B cell (primary cell): ENCODE measurements at regions of chr10 and their contacts with region 1.

Region 1: GRCh38 chr10:129605986-129606518 is 139.0 kb downstream of the MGMT start:
- DNase-seq: peak; percentile 43
- ATAC-seq: peak; percentile 75
- H3K4me3 ChIP-seq: peak overlapping the region in 4 of 5 experiments; percentile 12 to 46 (median 31)
- H3K4me3 Mint-ChIP-seq: peak overlapping the region; percentile 79
- H3K27ac ChIP-seq: peak overlapping the region in 1 of 2 donors; percentile 59
- H3K27ac Mint-ChIP-seq: peak overlapping the region; percentile 89
- H3K4me1 ChIP-seq: peaks cover 0 to 5% of the 10 kb centered on the region in 2 donors
- H3K4me1 Mint-ChIP-seq: peaks cover 41% of the 10 kb centered on the region
- H3K27me3 ChIP-seq: no peaks in the 10 kb centered on the region
- H3K27me3 Mint-ChIP-seq: no peaks in the 10 kb centered on the region
- CTCF ChIP-seq: no peak

Region 2: GRCh38 chr10:129398711-129399141 is 207.3 kb before region 1 on chr10:
- CTCF ChIA-PET with region 1: no interaction called
- POLR2A ChIA-PET with region 1: no interaction called
- intact Hi-C with region 1: no loop called
- DNase-seq: no peak
- ATAC-seq: no peak
- H3K4me3 ChIP-seq: no peak overlapping the region
- H3K4me3 Mint-ChIP-seq: no peak overlapping the region
- H3K27ac ChIP-seq: no peak overlapping the region
- H3K27ac Mint-ChIP-seq: no peak overlapping the region
- H3K4me1 ChIP-seq: no peaks in the 10 kb centered on the region
- H3K4me1 Mint-ChIP-seq: no peaks in the 10 kb centered on the region
- H3K27me3 ChIP-seq: no peaks in the 10 kb centered on the region
- H3K27me3 Mint-ChIP-seq: no peaks in the 10 kb centered on the region
- CTCF ChIP-seq: no peak

Region 3: DNA sequence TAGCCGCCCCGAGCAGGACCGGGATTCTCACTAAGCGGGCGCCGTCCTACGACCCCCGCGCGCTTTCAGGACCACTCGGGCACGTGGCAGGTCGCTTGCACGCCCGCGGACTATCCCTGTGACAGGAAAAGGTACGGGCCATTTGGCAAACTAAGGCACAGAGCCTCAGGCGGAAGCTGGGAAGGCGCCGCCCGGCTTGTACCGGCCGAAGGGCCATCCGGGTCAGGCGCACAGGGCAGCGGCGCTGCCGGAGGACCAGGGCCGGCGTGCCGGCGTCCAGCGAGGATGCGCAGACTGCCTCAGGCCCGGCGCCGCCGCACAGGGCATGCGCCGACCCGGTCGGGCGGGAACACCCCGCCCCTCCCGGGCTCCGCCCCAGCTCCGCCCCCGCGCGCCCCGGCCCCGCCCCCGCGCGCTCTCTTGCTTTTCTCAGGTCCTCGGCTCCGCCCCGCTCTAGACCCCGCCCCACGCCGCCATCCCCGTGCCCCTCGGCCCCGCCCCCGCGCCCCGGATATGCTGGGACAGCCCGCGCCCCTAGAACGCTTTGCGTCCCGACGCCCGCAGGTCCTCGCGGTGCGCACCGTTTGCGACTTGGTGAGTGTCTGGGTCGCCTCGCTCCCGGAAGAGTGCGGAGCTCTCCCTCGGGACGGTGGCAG is 139.2 kb before region 1 on chr10 and contains the start of gene MGMT:
- CTCF ChIA-PET with region 1: no interaction called
- POLR2A ChIA-PET with region 1: no interaction called
- intact Hi-C with region 1: loop called (anchors 1 kb)
- DNase-seq: peak; percentile 94
- ATAC-seq: peak; percentile 99
- H3K4me3 ChIP-seq: peak within 1 kb of the TSS; percentile 6 to 85 (median 82)
- H3K4me3 Mint-ChIP-seq: peak within 1 kb of the TSS; percentile 89
- H3K27ac ChIP-seq: peak within 1 kb of the TSS; percentile 69 to 81
- H3K27ac Mint-ChIP-seq: peak within 1 kb of the TSS; percentile 85
- H3K4me1 ChIP-seq: peaks cover 13 to 18% of the 10 kb centered on the region in 2 donors
- H3K4me1 Mint-ChIP-seq: peaks cover 22% of the 10 kb centered on the region
- H3K27me3 ChIP-seq: no peaks in the 10 kb centered on the region
- H3K27me3 Mint-ChIP-seq: no peaks in the 10 kb centered on the region
- CTCF ChIP-seq: no peak
- total RNA-seq, gene MGMT: 84.5 and 87.7 TPM in 2 replicates

Region 4: GRCh38 chr10:129551767-129552518 is 54.1 kb before region 1 on chr10:
- CTCF ChIA-PET with region 1: no interaction called
- POLR2A ChIA-PET with region 1: no interaction called
- intact Hi-C with region 1: loop called (anchors 2 kb)
- DNase-seq: peak; percentile 38
- ATAC-seq: peak; percentile 85
- H3K4me3 ChIP-seq: no peak overlapping the region
- H3K4me3 Mint-ChIP-seq: peak overlapping the region; percentile 54
- H3K27ac ChIP-seq: no peak overlapping the region
- H3K27ac Mint-ChIP-seq: peak overlapping the region; percentile 83
- H3K4me1 ChIP-seq: peaks cover 6 to 10% of the 10 kb centered on the region in 2 donors
- H3K4me1 Mint-ChIP-seq: peaks cover 29% of the 10 kb centered on the region
- H3K27me3 ChIP-seq: no peaks in the 10 kb centered on the region
- H3K27me3 Mint-ChIP-seq: no peaks in the 10 kb centered on the region
- CTCF ChIP-seq: no peak